Right cardiac atrium (tissue), 5 donors: ENCODE measurements at regions of chr22 and their contacts with region 1.

Region 1: GRCh38 chr22:28139961-28140360 is 220.9 kb upstream of the PITPNB start:
- DNase-seq: no peak
- ATAC-seq: peak in 1 of 2 donors; percentile 35
- H3K4me3 ChIP-seq: no peak overlapping the region
- H3K27ac ChIP-seq: no peak overlapping the region
- H3K4me1 ChIP-seq: peaks cover 2% of the 10 kb centered on the region
- H3K27me3 ChIP-seq: no peaks in the 10 kb centered on the region

Region 2: DNA sequence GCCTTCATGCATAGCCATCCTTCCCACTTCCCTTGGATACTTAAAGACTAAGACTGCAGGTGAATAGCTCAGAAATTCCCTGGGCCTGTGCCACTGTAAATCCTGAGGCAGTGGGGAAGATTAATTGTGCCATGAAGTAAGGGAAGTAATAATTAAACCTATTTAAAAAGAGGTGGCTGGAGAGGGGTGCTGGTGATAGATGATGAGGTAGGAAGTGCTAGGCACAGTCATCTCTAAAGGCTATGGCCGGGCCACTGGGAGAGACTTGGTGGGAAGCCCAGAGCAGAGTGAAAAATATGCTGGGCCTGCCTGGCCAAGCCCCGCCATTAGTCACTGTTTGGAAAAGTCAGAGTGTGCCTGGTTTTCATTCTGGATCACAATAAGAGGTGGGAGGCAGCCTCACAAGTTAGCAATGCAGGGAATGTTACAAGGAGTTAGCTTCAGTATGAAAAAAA is 23.7 kb before region 1 on chr22:
- intact Hi-C with region 1: loop called in 1 of 4 experiments (anchors 2 kb)
- DNase-seq: peak; percentile 61 to 73 (median 63)
- ATAC-seq: peak; percentile 80 to 81
- H3K4me3 ChIP-seq: no peak overlapping the region
- H3K27ac ChIP-seq: no peak overlapping the region
- H3K4me1 ChIP-seq: peaks cover 7% of the 10 kb centered on the region
- H3K27me3 ChIP-seq: no peaks in the 10 kb centered on the region